AG04449 (cell line): ENCODE measurements at regions of chr10 and their contacts with region 1.

Region 1: DNA sequence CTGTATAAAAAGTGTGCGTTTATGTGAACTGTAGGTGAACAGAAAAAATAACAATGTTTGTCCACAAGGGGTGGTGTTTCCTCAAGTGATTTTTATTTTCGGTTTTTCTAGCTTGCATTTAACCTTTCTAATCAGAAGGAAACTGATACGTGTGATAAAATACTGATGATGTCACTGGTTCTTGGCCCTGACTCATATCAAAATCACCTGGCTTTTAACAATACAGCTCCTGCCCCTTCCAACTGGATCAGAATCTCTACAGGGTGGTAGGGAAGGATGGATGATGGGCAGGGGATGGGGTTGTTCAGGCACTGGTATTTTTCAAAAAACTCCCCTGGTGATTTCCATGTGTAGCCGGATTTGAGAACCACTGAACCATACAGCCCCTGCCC is 10.9 kb downstream of the NPFFR1 start:
- DNase-seq: no peak
- H3K4me3 ChIP-seq: no peak overlapping the region
- CTCF ChIP-seq: peak; percentile 23

Region 2: DNA sequence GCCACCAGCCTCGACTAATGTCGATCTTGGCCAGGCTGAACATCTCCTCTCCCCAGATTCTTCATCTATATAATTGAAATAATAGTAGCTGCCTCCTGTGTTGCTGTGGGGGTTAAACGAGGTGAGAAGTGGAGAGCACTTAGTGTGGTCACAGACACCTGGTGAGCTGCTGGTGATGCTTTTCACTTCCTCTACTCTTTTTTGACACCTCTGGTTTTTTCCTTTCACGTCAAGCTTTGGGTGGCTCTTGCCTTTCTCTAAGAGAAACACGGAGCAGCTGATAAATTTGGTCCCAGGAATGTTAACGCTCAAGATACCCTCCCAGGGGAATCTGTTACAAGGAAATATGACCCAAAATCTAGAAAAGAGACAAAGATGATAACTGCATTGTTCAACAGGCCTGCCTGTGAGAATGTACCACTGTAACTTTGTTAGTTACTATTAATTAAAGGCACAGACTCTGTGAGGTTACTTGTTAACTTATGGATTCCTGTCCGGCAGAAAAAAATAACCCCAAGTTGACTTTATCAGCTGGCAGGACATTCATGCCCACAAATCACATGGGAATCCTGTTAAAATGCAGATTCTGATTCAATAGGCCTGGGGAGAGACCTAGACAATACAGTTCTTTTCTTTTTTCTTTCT is 20.4 kb after region 1 on chr10:
- CTCF ChIA-PET with region 1: interaction called, 10 read pairs
- POLR2A ChIA-PET with region 1: no interaction called
- DNase-seq: no peak
- H3K4me3 ChIP-seq: no peak overlapping the region
- CTCF ChIP-seq: no peak

Region 3: DNA sequence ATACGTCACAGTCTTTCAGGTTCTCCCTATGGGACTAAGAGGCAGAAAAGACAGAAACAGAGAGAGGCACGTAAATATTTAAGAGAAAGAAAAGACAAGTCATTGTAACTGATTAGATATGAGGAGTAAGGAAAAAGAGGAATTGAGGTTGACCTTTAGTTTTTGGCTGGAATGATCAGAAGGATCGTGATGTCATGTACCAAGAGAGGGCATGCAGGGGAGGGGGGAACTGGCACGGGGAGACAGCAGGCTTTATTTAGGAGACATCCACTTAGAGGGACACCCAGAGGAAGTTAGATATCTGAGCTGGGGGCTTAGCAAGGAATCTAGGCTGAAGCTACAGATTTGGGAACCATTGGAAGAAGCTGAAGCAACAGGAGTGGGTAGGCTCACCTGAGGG is 118.7 kb after region 1 on chr10:
- CTCF ChIA-PET with region 1: no interaction called
- POLR2A ChIA-PET with region 1: no interaction called
- DNase-seq: no peak
- H3K4me3 ChIP-seq: no peak overlapping the region
- CTCF ChIP-seq: no peak